Activated B cell treated with CpG ODN at 0.5 μM for 24 hours (primary cell): ENCODE measurements at regions of chr3 and their contacts with region 1.

Region 1: GRCh38 chr3:143847787-143848631 is at the start of gene SLC9A9:
- DNase-seq: no peak
- ATAC-seq: peak; percentile 94
- H3K4me3 Mint-ChIP-seq: peak within 1 kb of the TSS; percentile 96
- H3K27ac Mint-ChIP-seq: peak within 1 kb of the TSS; percentile 91
- H3K4me1 Mint-ChIP-seq: peaks cover 50% of the 10 kb centered on the region
- H3K27me3 Mint-ChIP-seq: no peaks in the 10 kb centered on the region
- CTCF ChIP-seq: no peak
- total RNA-seq, gene SLC9A9: 9.0 and 9.4 TPM in 2 replicates

Region 2: DNA sequence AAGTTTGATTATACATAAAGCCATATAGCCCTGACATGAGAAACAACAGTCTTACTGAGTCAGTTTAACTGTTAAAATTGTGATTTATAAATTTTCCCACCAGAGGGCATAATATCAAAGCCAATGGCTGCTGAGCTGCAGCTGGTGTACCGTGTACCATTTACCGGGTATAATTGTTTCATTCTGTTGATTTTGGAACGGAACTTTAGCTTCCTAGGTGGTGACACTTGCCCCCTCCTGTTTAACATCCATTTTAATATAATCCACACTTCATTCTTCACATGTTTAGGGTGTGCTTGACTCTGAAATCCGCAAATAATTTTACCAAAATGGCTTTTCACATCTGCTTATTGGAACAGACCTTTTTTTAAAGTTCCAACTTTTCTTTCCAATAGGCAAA is 72.5 kb before region 1 on chr3:
- CTCF ChIA-PET with region 1: interaction called, 3 read pairs
- POLR2A ChIA-PET with region 1: no interaction called
- intact Hi-C with region 1: loop called (anchors 1 kb)
- DNase-seq: no peak
- ATAC-seq: peak; percentile 70
- H3K4me3 Mint-ChIP-seq: no peak overlapping the region
- H3K27ac Mint-ChIP-seq: no peak overlapping the region
- H3K4me1 Mint-ChIP-seq: peaks cover 3% of the 10 kb centered on the region
- H3K27me3 Mint-ChIP-seq: no peaks in the 10 kb centered on the region
- CTCF ChIP-seq: no peak

Region 3: GRCh38 chr3:143831208-143831607 is 16.8 kb before region 1 on chr3:
- CTCF ChIA-PET with region 1: no interaction called
- POLR2A ChIA-PET with region 1: no interaction called
- intact Hi-C with region 1: loop called (anchors 1 kb)
- DNase-seq: no peak
- ATAC-seq: peak; percentile 34
- H3K4me3 Mint-ChIP-seq: no peak overlapping the region
- H3K27ac Mint-ChIP-seq: no peak overlapping the region
- H3K4me1 Mint-ChIP-seq: peaks cover 29% of the 10 kb centered on the region
- H3K27me3 Mint-ChIP-seq: no peaks in the 10 kb centered on the region
- CTCF ChIP-seq: no peak

Region 4: GRCh38 chr3:143924522-143925285 is 76.7 kb after region 1 on chr3:
- CTCF ChIA-PET with region 1: no interaction called
- POLR2A ChIA-PET with region 1: no interaction called
- intact Hi-C with region 1: loop called (anchors 1 kb)
- DNase-seq: no peak
- ATAC-seq: peak; percentile 69
- H3K4me3 Mint-ChIP-seq: peak overlapping the region; percentile 75
- H3K27ac Mint-ChIP-seq: peak overlapping the region; percentile 91
- H3K4me1 Mint-ChIP-seq: peaks cover 84% of the 10 kb centered on the region
- H3K27me3 Mint-ChIP-seq: no peaks in the 10 kb centered on the region
- CTCF ChIP-seq: no peak

Region 5: GRCh38 chr3:144028798-144029411 is 180.9 kb after region 1 on chr3:
- CTCF ChIA-PET with region 1: no interaction called
- POLR2A ChIA-PET with region 1: no interaction called
- intact Hi-C with region 1: loop called (anchors 5 kb)
- DNase-seq: no peak
- ATAC-seq: peak; percentile 92
- H3K4me3 Mint-ChIP-seq: peak overlapping the region; percentile 44
- H3K27ac Mint-ChIP-seq: peak overlapping the region; percentile 82
- H3K4me1 Mint-ChIP-seq: peaks cover 35% of the 10 kb centered on the region
- H3K27me3 Mint-ChIP-seq: no peaks in the 10 kb centered on the region
- CTCF ChIP-seq: no peak